Breast epithelium (tissue), 4 donors: ENCODE measurements at regions of chr6 and their contacts with region 1.

Region 1: GRCh38 chr6:30845183-30845582 is 39.1 kb upstream of the DDR1 start:
- DNase-seq: no peak
- H3K4me3 ChIP-seq: no peak overlapping the region
- H3K27ac ChIP-seq: no peak overlapping the region
- H3K4me1 ChIP-seq: peaks cover 0 to 3% of the 10 kb centered on the region in 2 donors
- H3K27me3 ChIP-seq: no peaks in the 10 kb centered on the region
- CTCF ChIP-seq: no peak
- POLR2A ChIP-seq: no peak

Region 2: GRCh38 chr6:30378290-30378937 is 466.8 kb before region 1 on chr6:
- intact Hi-C with region 1: no loop called
- DNase-seq: no peak
- H3K4me3 ChIP-seq: no peak overlapping the region
- H3K27ac ChIP-seq: no peak overlapping the region
- H3K4me1 ChIP-seq: no peaks in the 10 kb centered on the region
- H3K27me3 ChIP-seq: peaks cover 0 to 7% of the 10 kb centered on the region in 2 donors
- CTCF ChIP-seq: no peak
- POLR2A ChIP-seq: no peak

Region 3: GRCh38 chr6:30678964-30679726 is 166.0 kb before region 1 on chr6:
- intact Hi-C with region 1: loop called (anchors 5 kb)
- DNase-seq: peak; percentile 81 to 88
- H3K4me3 ChIP-seq: peak overlapping the region in 1 of 3 donors; percentile 34
- H3K27ac ChIP-seq: peak overlapping the region; percentile 48 to 51
- H3K4me1 ChIP-seq: peaks cover 7 to 11% of the 10 kb centered on the region in 2 donors
- H3K27me3 ChIP-seq: no peaks in the 10 kb centered on the region
- CTCF ChIP-seq: peak; percentile 89 to 97 (median 95)
- POLR2A ChIP-seq: no peak

Region 4: GRCh38 chr6:30981942-30982772 is 137.0 kb after region 1 on chr6:
- intact Hi-C with region 1: no loop called
- DNase-seq: peak in 1 of 2 donors; percentile 27
- H3K4me3 ChIP-seq: peak overlapping the region in 1 of 3 donors; percentile 44
- H3K27ac ChIP-seq: no peak overlapping the region
- H3K4me1 ChIP-seq: no peaks in the 10 kb centered on the region
- H3K27me3 ChIP-seq: no peaks in the 10 kb centered on the region
- CTCF ChIP-seq: peak in 1 of 3 donors; percentile 13
- POLR2A ChIP-seq: no peak

Region 5: DNA sequence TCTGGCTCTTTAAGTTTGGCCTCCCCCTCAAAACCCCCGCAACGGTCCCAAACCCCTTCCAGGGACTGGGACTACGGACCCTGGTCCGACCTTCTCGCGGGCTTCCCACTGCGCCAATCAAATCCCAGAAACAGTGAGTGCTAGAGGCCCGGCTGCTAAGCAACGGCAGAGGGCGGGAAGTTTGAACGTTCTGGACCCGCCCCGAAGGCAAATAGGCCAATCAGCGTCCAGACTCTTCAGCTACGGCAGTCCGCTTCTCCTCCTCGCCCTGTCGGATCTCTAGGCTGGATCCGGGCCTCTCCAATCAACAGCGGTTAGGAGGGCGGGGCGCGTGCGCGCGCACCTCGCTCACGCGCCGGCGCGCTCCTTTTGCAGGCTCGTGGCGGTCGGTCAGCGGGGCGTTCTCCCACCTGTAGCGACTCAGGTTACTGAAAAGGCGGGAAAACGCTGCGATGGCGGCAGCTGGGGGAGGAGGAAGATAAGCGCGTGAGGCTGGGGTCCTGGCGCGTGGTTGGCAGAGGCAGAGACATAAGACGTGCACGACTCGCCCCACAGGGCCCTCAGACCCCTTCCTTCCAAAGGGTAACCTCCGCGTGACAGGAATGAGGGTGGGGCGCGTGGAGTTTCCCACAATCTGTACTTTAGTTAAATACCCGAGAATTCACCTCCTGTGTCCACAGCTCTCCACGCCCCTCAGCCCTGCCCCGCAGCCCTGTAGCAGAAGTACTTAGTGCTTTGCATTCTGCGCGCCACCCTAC is 894.6 kb after region 1 on chr6 and contains the start of gene MSH5:
- intact Hi-C with region 1: no loop called
- DNase-seq: peak; percentile 99
- H3K4me3 ChIP-seq: peak within 1 kb of the TSS; percentile 69 to 84 (median 80)
- H3K27ac ChIP-seq: peak within 1 kb of the TSS; percentile 95 to 96
- H3K4me1 ChIP-seq: peaks cover 8 to 27% of the 10 kb centered on the region in 2 donors
- H3K27me3 ChIP-seq: no peaks in the 10 kb centered on the region
- CTCF ChIP-seq: no peak
- POLR2A ChIP-seq: peak; percentile 78
- total RNA-seq, gene MSH5: 7.9 to 13.4 (median 8.0) TPM